OCI-LY7 (cell line): ENCODE measurements at regions of chr11 and their contacts with region 1.

Region 1: DNA sequence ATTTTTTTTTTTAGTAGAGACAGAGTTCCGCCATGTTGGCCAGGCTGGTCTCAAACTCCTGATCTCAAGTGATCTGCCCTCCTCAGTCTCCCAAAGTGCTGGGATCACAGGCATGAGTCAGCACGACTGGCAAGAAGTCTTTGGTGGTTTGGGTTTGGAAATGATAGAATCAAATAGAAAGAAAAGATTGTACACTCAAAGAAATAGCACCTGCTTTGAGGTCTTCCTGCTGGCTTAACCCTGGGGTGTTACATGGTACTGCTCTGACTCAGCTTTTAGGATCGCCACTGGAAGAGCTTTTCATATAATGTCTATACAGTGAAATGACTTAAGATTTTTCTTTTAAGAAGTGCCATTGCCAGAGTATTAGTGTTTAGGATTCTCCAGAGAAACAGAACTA is 50.2 kb downstream of the JAM3 start:
- DNase-seq: no peak
- H3K4me3 ChIP-seq: no peak overlapping the region
- H3K27ac ChIP-seq: no peak overlapping the region
- H3K4me1 ChIP-seq: no peaks in the 10 kb centered on the region
- CTCF ChIP-seq: no peak

Region 2: GRCh38 chr11:134878785-134879184 is 759.7 kb after region 1 on chr11:
- CTCF ChIA-PET with region 1: no interaction called
- POLR2A ChIA-PET with region 1: no interaction called
- intact Hi-C with region 1: loop called (anchors 10 kb)
- DNase-seq: no peak
- H3K4me3 ChIP-seq: no peak overlapping the region
- H3K27ac ChIP-seq: no peak overlapping the region
- H3K4me1 ChIP-seq: no peaks in the 10 kb centered on the region
- CTCF ChIP-seq: no peak